Natural killer cell (primary cell): ENCODE measurements at regions of chr17 and their contacts with region 1.

Region 1: GRCh38 chr17:28494445-28495188 is 11.5 kb upstream of the FOXN1 start:
- DNase-seq: peak; percentile 70 to 88
- ATAC-seq: peak; percentile 72 to 99 (median 94)
- H3K4me3 ChIP-seq: no peak overlapping the region
- H3K4me3 Mint-ChIP-seq: no peak overlapping the region
- H3K27ac ChIP-seq: no peak overlapping the region
- H3K27ac Mint-ChIP-seq: no peak overlapping the region
- H3K4me1 ChIP-seq: no peaks in the 10 kb centered on the region
- H3K4me1 Mint-ChIP-seq: no peaks in the 10 kb centered on the region
- H3K27me3 ChIP-seq: no peaks in the 10 kb centered on the region
- H3K27me3 Mint-ChIP-seq: peaks cover 0 to 6% of the 10 kb centered on the region in 2 donors
- CTCF ChIP-seq: peak; percentile 82

Region 2: GRCh38 chr17:28145348-28145747 is 349.3 kb before region 1 on chr17:
- intact Hi-C with region 1: no loop called
- DNase-seq: no peak
- ATAC-seq: no peak
- H3K4me3 ChIP-seq: no peak overlapping the region
- H3K4me3 Mint-ChIP-seq: no peak overlapping the region
- H3K27ac ChIP-seq: no peak overlapping the region
- H3K27ac Mint-ChIP-seq: no peak overlapping the region
- H3K4me1 ChIP-seq: no peaks in the 10 kb centered on the region
- H3K4me1 Mint-ChIP-seq: no peaks in the 10 kb centered on the region
- H3K27me3 ChIP-seq: no peaks in the 10 kb centered on the region
- H3K27me3 Mint-ChIP-seq: no peaks in the 10 kb centered on the region
- CTCF ChIP-seq: no peak

Region 3: DNA sequence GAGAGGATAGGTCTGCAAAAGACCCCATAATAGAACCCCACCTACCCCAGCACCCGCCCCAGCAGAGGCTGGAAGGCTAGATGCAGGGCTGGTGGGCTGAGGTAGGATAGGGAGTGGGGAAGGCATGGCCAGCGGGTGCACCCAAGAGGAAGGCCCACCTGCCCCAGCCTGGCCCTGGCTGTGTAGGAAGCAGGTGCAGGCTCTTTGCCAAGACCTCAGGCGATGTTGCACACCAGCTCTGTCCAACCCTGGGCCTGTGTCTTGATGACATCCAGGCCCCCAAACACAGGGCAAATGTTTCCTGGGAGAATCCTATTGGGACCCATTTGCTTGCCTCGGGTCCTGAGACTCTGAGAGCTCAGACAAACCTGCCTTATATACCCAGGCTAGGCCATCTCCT is 45.6 kb after region 1 on chr17:
- intact Hi-C with region 1: loop called (anchors 1 kb)
- DNase-seq: no peak
- ATAC-seq: no peak
- H3K4me3 ChIP-seq: no peak overlapping the region
- H3K4me3 Mint-ChIP-seq: no peak overlapping the region
- H3K27ac ChIP-seq: no peak overlapping the region
- H3K27ac Mint-ChIP-seq: no peak overlapping the region
- H3K4me1 ChIP-seq: no peaks in the 10 kb centered on the region
- H3K4me1 Mint-ChIP-seq: no peaks in the 10 kb centered on the region
- H3K27me3 ChIP-seq: no peaks in the 10 kb centered on the region
- H3K27me3 Mint-ChIP-seq: no peaks in the 10 kb centered on the region
- CTCF ChIP-seq: no peak

Region 4: GRCh38 chr17:28598799-28599310 is 104.2 kb after region 1 on chr17 and contains the start of gene SPAG5:
- intact Hi-C with region 1: loop called (anchors 5 kb)
- DNase-seq: peak; percentile 96 to 97
- ATAC-seq: peak; percentile 89 to 99 (median 93)
- H3K4me3 ChIP-seq: peak within 1 kb of the TSS; percentile 71
- H3K4me3 Mint-ChIP-seq: peak within 1 kb of the TSS; percentile 94
- H3K27ac ChIP-seq: peak within 1 kb of the TSS; percentile 95
- H3K27ac Mint-ChIP-seq: peak within 1 kb of the TSS; percentile 95 to 98
- H3K4me1 ChIP-seq: peaks cover 19% of the 10 kb centered on the region
- H3K4me1 Mint-ChIP-seq: peaks cover 22 to 23% of the 10 kb centered on the region in 2 donors
- H3K27me3 ChIP-seq: no peaks in the 10 kb centered on the region
- H3K27me3 Mint-ChIP-seq: no peaks in the 10 kb centered on the region
- CTCF ChIP-seq: no peak
- total RNA-seq, gene SPAG5: 18.0 to 19.6 (median 19.3) TPM

Region 5: GRCh38 chr17:28612936-28613872 is 118.6 kb after region 1 on chr17:
- intact Hi-C with region 1: loop called (anchors 1 kb)
- DNase-seq: peak; percentile 23 to 68
- ATAC-seq: peak; percentile 46 to 68 (median 66)
- H3K4me3 ChIP-seq: no peak overlapping the region
- H3K4me3 Mint-ChIP-seq: no peak overlapping the region
- H3K27ac ChIP-seq: no peak overlapping the region
- H3K27ac Mint-ChIP-seq: peak overlapping the region; percentile 14 to 59
- H3K4me1 ChIP-seq: no peaks in the 10 kb centered on the region
- H3K4me1 Mint-ChIP-seq: no peaks in the 10 kb centered on the region
- H3K27me3 ChIP-seq: no peaks in the 10 kb centered on the region
- H3K27me3 Mint-ChIP-seq: no peaks in the 10 kb centered on the region
- CTCF ChIP-seq: peak; percentile 72